GM12878 (cell line): ENCODE measurements at regions of chr13 and their contacts with region 1.

Region 1: DNA sequence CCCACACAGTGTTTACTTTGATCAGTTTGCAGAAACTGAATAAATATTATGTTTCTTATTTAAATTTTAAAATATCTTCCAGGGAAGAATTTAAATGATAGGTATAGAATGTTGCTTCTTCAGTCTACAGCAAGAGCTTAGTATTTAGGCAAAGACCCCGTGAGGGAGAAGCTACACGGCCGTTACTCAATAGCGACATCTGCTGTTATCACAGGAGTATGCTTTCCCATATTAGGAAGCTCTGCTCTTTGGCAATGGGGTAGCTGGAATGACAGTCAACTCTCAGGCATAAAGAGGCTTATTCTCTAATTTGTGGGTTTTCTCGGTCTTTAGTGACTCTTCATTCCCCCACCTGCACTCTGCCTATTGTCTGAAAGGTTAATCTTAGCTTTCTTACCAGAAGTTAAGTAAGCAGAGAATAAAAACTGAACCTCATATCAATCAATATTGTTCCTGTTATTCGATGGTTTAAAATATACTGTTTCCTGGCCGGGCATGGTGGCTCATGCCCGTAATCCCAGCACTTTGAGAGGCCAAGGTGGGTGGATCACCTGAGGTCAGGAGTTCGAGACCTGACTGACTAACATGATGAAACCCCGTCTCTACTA is 13.2 kb upstream of the LHFPL6 start:
- DNase-seq: no peak
- ATAC-seq: peak; percentile 94
- H3K4me3 ChIP-seq: no peak overlapping the region
- H3K27ac ChIP-seq: no peak overlapping the region
- H3K4me1 ChIP-seq: no peaks in the 10 kb centered on the region
- H3K27me3 ChIP-seq: no peaks in the 10 kb centered on the region
- CTCF ChIP-seq: peak; percentile 80 to 93 (median 84)
- EP300 ChIP-seq: no peak
- POLR2A ChIP-seq: no peak
- RAD21 ChIP-seq: peak; percentile 73

Region 2: DNA sequence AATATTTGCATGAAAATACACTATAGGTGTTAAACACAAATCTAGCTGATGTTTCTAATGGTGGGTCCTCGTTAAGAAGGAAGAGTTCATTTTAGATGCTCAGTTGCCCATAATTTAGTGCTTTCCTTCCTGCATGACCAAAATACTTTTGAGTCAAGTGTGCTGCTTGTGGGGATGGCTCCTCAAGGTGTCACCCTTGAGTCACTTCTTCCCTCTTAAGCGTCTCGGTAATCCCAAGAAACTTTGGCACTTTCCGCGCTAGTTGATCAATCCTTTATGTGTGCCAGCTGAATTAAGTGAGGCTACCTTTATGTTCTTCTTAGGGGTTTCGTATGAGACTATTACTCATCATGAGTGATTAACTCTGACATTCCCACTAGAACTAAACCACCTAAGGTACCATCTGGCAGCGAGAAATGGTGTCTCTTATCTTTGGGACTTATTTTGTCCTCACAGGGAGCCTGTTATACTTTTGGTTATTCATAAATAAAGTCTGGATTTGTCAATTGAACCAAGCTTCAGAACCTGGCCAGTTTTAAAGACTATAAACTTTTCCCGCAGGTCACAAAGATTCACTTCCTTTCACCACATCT is 471.2 kb before region 1 on chr13:
- CTCF ChIA-PET with region 1: interaction called, 112 read pairs
- POLR2A ChIA-PET with region 1: no interaction called
- RAD21 ChIA-PET with region 1: interaction called, 62 read pairs
- SMC1A ChIA-PET with region 1: interaction called, 53 read pairs
- in situ Hi-C with region 1: loop called (anchors 5 kb)
- intact Hi-C with region 1: loop called (anchors 1 kb)
- DNase-seq: no peak
- ATAC-seq: peak; percentile 80
- H3K4me3 ChIP-seq: no peak overlapping the region
- H3K27ac ChIP-seq: no peak overlapping the region
- H3K4me1 ChIP-seq: no peaks in the 10 kb centered on the region
- H3K27me3 ChIP-seq: no peaks in the 10 kb centered on the region
- CTCF ChIP-seq: peak; percentile 65 to 86 (median 69)
- EP300 ChIP-seq: no peak
- POLR2A ChIP-seq: no peak
- RAD21 ChIP-seq: peak; percentile 80

Region 3: GRCh38 chr13:39273953-39274738 is 342.0 kb before region 1 on chr13:
- CTCF ChIA-PET with region 1: interaction called, 63 read pairs
- POLR2A ChIA-PET with region 1: no interaction called
- RAD21 ChIA-PET with region 1: interaction called, 48 read pairs
- SMC1A ChIA-PET with region 1: interaction called, 49 read pairs
- in situ Hi-C with region 1: no loop called
- intact Hi-C with region 1: loop called (anchors 1 kb)
- DNase-seq: no peak
- ATAC-seq: peak; percentile 47
- H3K4me3 ChIP-seq: no peak overlapping the region
- H3K27ac ChIP-seq: no peak overlapping the region
- H3K4me1 ChIP-seq: no peaks in the 10 kb centered on the region
- H3K27me3 ChIP-seq: no peaks in the 10 kb centered on the region
- CTCF ChIP-seq: peak; percentile 10 to 56 (median 28); a peak in 4 of 6 replicates
- EP300 ChIP-seq: no peak
- POLR2A ChIP-seq: no peak
- RAD21 ChIP-seq: peak; percentile 56

Region 4: DNA sequence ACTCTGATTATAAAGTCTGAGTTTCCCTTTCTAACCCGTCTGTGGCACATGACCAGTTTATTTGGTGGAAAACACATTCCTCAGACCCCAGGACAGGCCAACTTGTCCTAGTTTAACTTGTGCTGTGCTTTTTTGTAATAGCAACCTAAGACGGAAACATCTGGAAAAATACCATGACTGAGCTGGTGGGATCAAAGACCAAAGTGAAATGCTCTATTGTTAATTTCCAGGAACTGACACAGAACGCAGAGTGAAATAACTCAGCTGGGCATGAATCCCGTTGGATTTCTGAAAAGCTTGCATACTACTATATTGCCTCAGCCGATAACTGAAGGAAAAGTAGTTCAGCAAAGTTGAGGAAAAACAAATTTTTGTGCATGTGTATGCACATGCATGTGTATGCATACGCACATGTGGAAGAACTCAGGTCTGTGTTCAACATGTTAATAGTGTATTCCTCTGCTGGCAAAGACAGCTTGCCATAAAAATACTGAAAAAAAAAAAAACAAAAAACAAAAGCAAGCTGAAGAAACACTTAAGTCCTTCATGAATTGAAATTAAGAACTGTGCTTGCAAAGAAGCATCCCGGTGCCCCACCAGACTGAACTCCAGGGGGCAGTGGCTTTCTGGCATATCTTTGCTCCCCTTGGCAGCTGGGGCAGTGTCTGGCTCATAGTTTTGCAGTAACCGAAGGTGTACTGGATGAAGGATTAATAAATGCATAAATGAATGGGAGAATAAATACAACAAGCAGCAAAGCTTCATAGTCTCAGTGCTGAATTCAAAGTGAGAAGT is 201.0 kb before region 1 on chr13:
- CTCF ChIA-PET with region 1: interaction called, 88 read pairs
- POLR2A ChIA-PET with region 1: no interaction called
- RAD21 ChIA-PET with region 1: interaction called, 26 read pairs
- SMC1A ChIA-PET with region 1: interaction called, 65 read pairs
- in situ Hi-C with region 1: no loop called
- intact Hi-C with region 1: loop called (anchors 1 kb)
- DNase-seq: no peak
- ATAC-seq: peak; percentile 74
- H3K4me3 ChIP-seq: no peak overlapping the region
- H3K27ac ChIP-seq: peak overlapping the region; percentile 62; the same call in 1 of the 2 replicates
- H3K4me1 ChIP-seq: peaks cover 4% of the 10 kb centered on the region; the same call in 1 of the 2 replicates
- H3K27me3 ChIP-seq: no peaks in the 10 kb centered on the region
- CTCF ChIP-seq: peak; percentile 13 to 35 (median 25); a peak in 3 of 6 replicates
- EP300 ChIP-seq: no peak
- POLR2A ChIP-seq: no peak
- RAD21 ChIP-seq: 0 out of 2 replicates have a peak, but pooled peaks have one; percentile 33

Region 5: DNA sequence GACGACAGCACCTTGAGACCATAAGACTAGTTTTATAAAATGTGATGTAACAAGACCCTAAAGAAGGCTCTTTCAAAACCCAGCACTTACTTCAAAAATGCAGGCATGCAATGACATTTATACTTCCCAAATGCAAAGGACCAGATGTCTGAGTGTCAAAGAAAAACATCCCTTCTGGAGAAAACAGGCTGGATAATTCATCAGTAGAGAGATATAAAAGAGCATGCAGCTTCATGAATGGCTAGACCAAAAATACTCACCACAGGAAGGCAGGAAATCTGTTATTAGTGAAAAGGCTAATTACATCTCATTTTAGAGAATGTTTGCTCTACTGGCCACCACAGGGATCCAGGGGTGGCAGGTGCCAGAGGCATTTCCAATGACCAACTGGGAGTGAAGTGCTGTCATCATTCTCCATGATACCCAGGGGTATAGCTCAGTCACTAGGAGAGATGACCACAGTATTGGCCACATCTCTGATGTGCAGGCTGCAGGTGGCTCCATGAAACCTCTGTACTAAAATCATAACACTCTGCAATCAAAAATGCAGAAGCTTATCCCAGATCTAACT is 119.7 kb before region 1 on chr13:
- CTCF ChIA-PET with region 1: interaction called, 17 read pairs
- POLR2A ChIA-PET with region 1: no interaction called
- RAD21 ChIA-PET with region 1: interaction called, 19 read pairs
- SMC1A ChIA-PET with region 1: interaction called, 5 read pairs
- in situ Hi-C with region 1: no loop called
- intact Hi-C with region 1: no loop called
- DNase-seq: no peak
- ATAC-seq: no peak
- H3K4me3 ChIP-seq: no peak overlapping the region
- H3K27ac ChIP-seq: no peak overlapping the region
- H3K4me1 ChIP-seq: no peaks in the 10 kb centered on the region
- H3K27me3 ChIP-seq: no peaks in the 10 kb centered on the region; a peak in 1 of 4 replicates
- CTCF ChIP-seq: no peak
- EP300 ChIP-seq: no peak
- POLR2A ChIP-seq: no peak
- RAD21 ChIP-seq: no peak

Region 6: DNA sequence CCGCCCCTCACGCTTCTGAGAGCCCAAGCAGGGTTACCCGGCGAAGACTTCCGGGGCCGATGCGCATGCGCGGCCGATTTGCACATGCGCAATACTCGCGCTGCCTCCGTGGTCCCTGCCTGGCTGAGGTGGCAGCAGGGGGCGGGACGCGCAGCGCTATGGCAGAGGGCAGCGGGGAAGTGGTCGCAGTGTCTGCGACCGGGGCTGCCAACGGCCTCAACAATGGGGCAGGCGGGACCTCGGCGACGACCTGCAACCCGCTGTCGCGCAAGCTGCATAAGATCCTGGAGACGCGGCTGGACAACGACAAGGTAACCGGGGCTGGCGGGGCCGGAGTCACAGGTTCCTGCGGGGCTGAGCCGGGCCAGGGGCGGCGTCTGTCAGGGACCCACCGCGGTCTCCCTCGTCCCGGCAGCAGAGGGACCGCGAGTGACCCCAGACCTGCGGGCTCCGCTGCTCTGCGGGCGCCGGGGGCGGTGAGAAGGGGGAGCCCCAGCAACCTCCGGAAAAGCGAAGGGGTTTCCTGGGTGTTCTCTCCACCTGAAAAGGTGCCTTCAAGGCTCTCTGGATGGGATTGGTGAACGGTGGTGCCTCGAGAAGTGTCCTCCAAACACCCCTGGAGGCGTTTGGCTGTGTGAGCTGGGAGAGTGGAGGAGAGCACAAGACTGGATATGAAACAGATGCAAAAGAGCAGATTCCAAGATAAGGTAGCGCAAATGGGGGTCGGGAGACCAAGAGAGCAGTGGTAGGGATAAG is 39.6 kb after region 1 on chr13 and contains the start of gene COG6:
- CTCF ChIA-PET with region 1: interaction called, 10 read pairs
- POLR2A ChIA-PET with region 1: no interaction called
- RAD21 ChIA-PET with region 1: no interaction called
- SMC1A ChIA-PET with region 1: interaction called, 5 read pairs
- in situ Hi-C with region 1: no loop called
- intact Hi-C with region 1: no loop called
- DNase-seq: peak; percentile 86
- ATAC-seq: peak; percentile 95
- H3K4me3 ChIP-seq: peak within 1 kb of the TSS; percentile 89
- H3K27ac ChIP-seq: peak within 1 kb of the TSS; percentile 38; the same call in 1 of the 2 replicates
- H3K4me1 ChIP-seq: no peaks in the 10 kb centered on the region; the same call in 1 of the 2 replicates
- H3K27me3 ChIP-seq: no peaks in the 10 kb centered on the region
- CTCF ChIP-seq: no peak
- EP300 ChIP-seq: no peak
- POLR2A ChIP-seq: peak; percentile 90
- RAD21 ChIP-seq: no peak
- polyA plus RNA-seq, gene COG6: 4.5 to 5.3 TPM

Region 7: DNA sequence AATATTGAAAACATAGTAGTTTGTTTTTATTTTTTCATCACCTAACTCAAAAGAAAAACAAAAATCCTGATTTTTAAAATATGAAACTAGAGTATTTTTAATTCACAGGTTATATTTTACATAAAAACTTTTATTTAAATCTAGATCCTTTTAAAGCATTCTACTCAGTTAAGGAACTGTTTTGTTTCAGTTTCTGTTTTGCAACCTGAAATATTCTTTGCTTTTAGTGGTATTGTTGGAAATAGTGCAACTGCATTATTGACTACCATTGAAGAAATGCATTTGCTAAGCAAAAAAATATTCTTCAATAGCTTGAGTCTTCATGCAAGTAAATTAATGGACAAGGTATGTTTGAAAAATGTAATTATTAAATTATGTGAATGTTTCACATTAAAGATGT is 83.1 kb after region 1 on chr13:
- CTCF ChIA-PET with region 1: no interaction called
- POLR2A ChIA-PET with region 1: no interaction called
- RAD21 ChIA-PET with region 1: no interaction called
- SMC1A ChIA-PET with region 1: no interaction called
- in situ Hi-C with region 1: no loop called
- intact Hi-C with region 1: no loop called
- DNase-seq: no peak
- ATAC-seq: no peak
- H3K4me3 ChIP-seq: no peak overlapping the region
- H3K27ac ChIP-seq: no peak overlapping the region
- H3K4me1 ChIP-seq: no peaks in the 10 kb centered on the region; the same call in 1 of the 2 replicates
- H3K27me3 ChIP-seq: no peaks in the 10 kb centered on the region
- CTCF ChIP-seq: no peak
- EP300 ChIP-seq: no peak
- POLR2A ChIP-seq: no peak
- RAD21 ChIP-seq: no peak

Region 8: GRCh38 chr13:39729156-39729555 is 113.0 kb after region 1 on chr13:
- CTCF ChIA-PET with region 1: no interaction called
- POLR2A ChIA-PET with region 1: no interaction called
- RAD21 ChIA-PET with region 1: no interaction called
- SMC1A ChIA-PET with region 1: no interaction called
- in situ Hi-C with region 1: no loop called
- intact Hi-C with region 1: no loop called
- DNase-seq: no peak
- ATAC-seq: no peak
- H3K4me3 ChIP-seq: no peak overlapping the region
- H3K27ac ChIP-seq: no peak overlapping the region
- H3K4me1 ChIP-seq: no peaks in the 10 kb centered on the region
- H3K27me3 ChIP-seq: no peaks in the 10 kb centered on the region
- CTCF ChIP-seq: no peak
- EP300 ChIP-seq: no peak
- POLR2A ChIP-seq: no peak
- RAD21 ChIP-seq: no peak